Mammary epithelial cell (primary cell): ENCODE measurements at regions of chr13 and their contacts with region 1.

Region 1: DNA sequence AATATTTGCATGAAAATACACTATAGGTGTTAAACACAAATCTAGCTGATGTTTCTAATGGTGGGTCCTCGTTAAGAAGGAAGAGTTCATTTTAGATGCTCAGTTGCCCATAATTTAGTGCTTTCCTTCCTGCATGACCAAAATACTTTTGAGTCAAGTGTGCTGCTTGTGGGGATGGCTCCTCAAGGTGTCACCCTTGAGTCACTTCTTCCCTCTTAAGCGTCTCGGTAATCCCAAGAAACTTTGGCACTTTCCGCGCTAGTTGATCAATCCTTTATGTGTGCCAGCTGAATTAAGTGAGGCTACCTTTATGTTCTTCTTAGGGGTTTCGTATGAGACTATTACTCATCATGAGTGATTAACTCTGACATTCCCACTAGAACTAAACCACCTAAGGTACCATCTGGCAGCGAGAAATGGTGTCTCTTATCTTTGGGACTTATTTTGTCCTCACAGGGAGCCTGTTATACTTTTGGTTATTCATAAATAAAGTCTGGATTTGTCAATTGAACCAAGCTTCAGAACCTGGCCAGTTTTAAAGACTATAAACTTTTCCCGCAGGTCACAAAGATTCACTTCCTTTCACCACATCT is 106.8 kb downstream of the NHLRC3 start:
- DNase-seq: peak; percentile 54
- H3K4me3 ChIP-seq: no peak overlapping the region
- H3K27ac ChIP-seq: no peak overlapping the region
- H3K4me1 ChIP-seq: peaks cover 8% of the 10 kb centered on the region
- H3K27me3 ChIP-seq: peaks cover 27% of the 10 kb centered on the region
- CTCF ChIP-seq: peak; percentile 72 to 90

Region 2: DNA sequence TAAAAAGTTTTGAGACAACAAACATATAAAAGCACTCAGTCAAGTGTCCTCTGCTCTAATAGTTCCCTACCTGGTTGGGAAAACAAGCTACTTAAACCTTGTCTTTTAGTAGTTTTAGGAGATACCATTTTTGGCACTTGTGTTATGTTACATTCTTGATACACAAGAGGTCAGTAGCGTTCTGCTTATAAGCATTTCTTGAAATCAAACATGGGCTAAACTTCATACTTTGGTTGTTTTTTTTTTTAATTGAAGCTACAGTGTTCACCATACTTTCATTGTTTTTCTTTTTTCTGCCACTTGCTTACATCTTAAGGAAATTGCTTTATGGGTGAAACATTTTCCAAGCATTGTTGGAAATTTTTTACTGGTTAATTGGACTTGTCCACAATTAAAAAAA is 93.9 kb before region 1 on chr13:
- CTCF ChIA-PET with region 1: no interaction called
- dilution Hi-C with region 1: no loop called
- in situ Hi-C with region 1: no loop called
- intact Hi-C with region 1: loop called (anchors 1 kb)
- DNase-seq: peak; percentile 22
- H3K4me3 ChIP-seq: no peak overlapping the region
- H3K27ac ChIP-seq: no peak overlapping the region
- H3K4me1 ChIP-seq: peaks cover 10% of the 10 kb centered on the region
- H3K27me3 ChIP-seq: no peaks in the 10 kb centered on the region
- CTCF ChIP-seq: peak; percentile 22 to 46

Region 3: GRCh38 chr13:39159393-39159792 is 14.4 kb after region 1 on chr13:
- CTCF ChIA-PET with region 1: no interaction called
- dilution Hi-C with region 1: no loop called
- in situ Hi-C with region 1: no loop called
- intact Hi-C with region 1: no loop called
- DNase-seq: peak; percentile 32
- H3K4me3 ChIP-seq: no peak overlapping the region
- H3K27ac ChIP-seq: no peak overlapping the region
- H3K4me1 ChIP-seq: no peaks in the 10 kb centered on the region
- H3K27me3 ChIP-seq: no peaks in the 10 kb centered on the region
- CTCF ChIP-seq: no peak

Region 4: GRCh38 chr13:39263033-39263432 is 118.0 kb after region 1 on chr13:
- CTCF ChIA-PET with region 1: interaction called, 4 read pairs
- dilution Hi-C with region 1: no loop called
- in situ Hi-C with region 1: loop called (anchors 5 kb)
- intact Hi-C with region 1: loop called (anchors 1 kb)
- DNase-seq: peak; percentile 37
- H3K4me3 ChIP-seq: no peak overlapping the region
- H3K27ac ChIP-seq: no peak overlapping the region
- H3K4me1 ChIP-seq: no peaks in the 10 kb centered on the region
- H3K27me3 ChIP-seq: no peaks in the 10 kb centered on the region
- CTCF ChIP-seq: peak; percentile 77 to 78

Region 5: GRCh38 chr13:39406688-39407087 is 261.7 kb after region 1 on chr13:
- CTCF ChIA-PET with region 1: no interaction called
- dilution Hi-C with region 1: no loop called
- in situ Hi-C with region 1: loop called in 1 of 2 experiments (anchors 25 kb)
- intact Hi-C with region 1: loop called (anchors 5 kb)
- DNase-seq: peak; percentile 92
- H3K4me3 ChIP-seq: no peak overlapping the region
- H3K27ac ChIP-seq: peak overlapping the region; percentile 37
- H3K4me1 ChIP-seq: peaks cover 5% of the 10 kb centered on the region
- H3K27me3 ChIP-seq: no peaks in the 10 kb centered on the region
- CTCF ChIP-seq: peak; percentile 35 to 53

Region 6: DNA sequence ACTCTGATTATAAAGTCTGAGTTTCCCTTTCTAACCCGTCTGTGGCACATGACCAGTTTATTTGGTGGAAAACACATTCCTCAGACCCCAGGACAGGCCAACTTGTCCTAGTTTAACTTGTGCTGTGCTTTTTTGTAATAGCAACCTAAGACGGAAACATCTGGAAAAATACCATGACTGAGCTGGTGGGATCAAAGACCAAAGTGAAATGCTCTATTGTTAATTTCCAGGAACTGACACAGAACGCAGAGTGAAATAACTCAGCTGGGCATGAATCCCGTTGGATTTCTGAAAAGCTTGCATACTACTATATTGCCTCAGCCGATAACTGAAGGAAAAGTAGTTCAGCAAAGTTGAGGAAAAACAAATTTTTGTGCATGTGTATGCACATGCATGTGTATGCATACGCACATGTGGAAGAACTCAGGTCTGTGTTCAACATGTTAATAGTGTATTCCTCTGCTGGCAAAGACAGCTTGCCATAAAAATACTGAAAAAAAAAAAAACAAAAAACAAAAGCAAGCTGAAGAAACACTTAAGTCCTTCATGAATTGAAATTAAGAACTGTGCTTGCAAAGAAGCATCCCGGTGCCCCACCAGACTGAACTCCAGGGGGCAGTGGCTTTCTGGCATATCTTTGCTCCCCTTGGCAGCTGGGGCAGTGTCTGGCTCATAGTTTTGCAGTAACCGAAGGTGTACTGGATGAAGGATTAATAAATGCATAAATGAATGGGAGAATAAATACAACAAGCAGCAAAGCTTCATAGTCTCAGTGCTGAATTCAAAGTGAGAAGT is 270.2 kb after region 1 on chr13:
- CTCF ChIA-PET with region 1: no interaction called
- dilution Hi-C with region 1: no loop called
- in situ Hi-C with region 1: loop called in 1 of 2 experiments (anchors 25 kb)
- intact Hi-C with region 1: no loop called
- DNase-seq: peak; percentile 22
- H3K4me3 ChIP-seq: no peak overlapping the region
- H3K27ac ChIP-seq: no peak overlapping the region
- H3K4me1 ChIP-seq: peaks cover 7% of the 10 kb centered on the region
- H3K27me3 ChIP-seq: no peaks in the 10 kb centered on the region
- CTCF ChIP-seq: peak; percentile 53 to 73

Region 7: DNA sequence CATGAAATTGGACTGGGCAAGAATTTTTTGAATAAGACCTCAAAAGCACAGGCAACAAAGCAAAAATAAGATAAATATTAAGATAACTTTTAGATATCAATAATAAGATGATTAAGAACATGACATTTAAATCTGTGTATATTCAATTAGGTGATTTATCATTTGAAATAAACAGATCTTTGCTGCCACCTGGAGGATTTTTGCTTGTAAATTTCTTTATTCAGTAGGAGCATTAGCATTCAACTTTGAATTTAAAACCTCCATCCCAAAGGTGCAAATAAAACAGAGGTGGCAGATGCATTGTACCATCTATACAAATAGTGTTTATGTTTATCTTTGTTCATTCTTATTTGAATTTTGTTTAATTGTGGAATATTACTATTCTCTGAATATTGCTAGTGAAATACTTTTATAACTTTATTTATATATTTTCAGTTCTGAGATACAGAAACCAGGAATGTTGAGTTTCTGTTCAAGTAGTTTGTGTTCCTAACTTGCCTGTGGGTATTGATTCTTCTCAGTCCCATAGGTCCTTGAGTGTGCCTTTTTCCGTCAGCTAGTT is 531.4 kb after region 1 on chr13:
- CTCF ChIA-PET with region 1: no interaction called
- dilution Hi-C with region 1: no loop called
- in situ Hi-C with region 1: no loop called
- intact Hi-C with region 1: loop called (anchors 5 kb)
- DNase-seq: peak; percentile 21
- H3K4me3 ChIP-seq: no peak overlapping the region
- H3K27ac ChIP-seq: no peak overlapping the region
- H3K4me1 ChIP-seq: no peaks in the 10 kb centered on the region
- H3K27me3 ChIP-seq: no peaks in the 10 kb centered on the region
- CTCF ChIP-seq: peak; percentile 35 to 42